MCF 10A (cell line): ENCODE measurements at regions of chr7 and their contacts with region 1.

Region 1: GRCh38 chr7:51141451-51142003 is 175.1 kb downstream of the COBL start:
- DNase-seq: peak; percentile 55
- H3K4me3 Mint-ChIP-seq: no peak overlapping the region
- H3K27ac Mint-ChIP-seq: no peak overlapping the region
- H3K4me1 Mint-ChIP-seq: peaks cover 27% of the 10 kb centered on the region
- H3K27me3 Mint-ChIP-seq: no peaks in the 10 kb centered on the region
- CTCF ChIP-seq: peak; percentile 71

Region 2: DNA sequence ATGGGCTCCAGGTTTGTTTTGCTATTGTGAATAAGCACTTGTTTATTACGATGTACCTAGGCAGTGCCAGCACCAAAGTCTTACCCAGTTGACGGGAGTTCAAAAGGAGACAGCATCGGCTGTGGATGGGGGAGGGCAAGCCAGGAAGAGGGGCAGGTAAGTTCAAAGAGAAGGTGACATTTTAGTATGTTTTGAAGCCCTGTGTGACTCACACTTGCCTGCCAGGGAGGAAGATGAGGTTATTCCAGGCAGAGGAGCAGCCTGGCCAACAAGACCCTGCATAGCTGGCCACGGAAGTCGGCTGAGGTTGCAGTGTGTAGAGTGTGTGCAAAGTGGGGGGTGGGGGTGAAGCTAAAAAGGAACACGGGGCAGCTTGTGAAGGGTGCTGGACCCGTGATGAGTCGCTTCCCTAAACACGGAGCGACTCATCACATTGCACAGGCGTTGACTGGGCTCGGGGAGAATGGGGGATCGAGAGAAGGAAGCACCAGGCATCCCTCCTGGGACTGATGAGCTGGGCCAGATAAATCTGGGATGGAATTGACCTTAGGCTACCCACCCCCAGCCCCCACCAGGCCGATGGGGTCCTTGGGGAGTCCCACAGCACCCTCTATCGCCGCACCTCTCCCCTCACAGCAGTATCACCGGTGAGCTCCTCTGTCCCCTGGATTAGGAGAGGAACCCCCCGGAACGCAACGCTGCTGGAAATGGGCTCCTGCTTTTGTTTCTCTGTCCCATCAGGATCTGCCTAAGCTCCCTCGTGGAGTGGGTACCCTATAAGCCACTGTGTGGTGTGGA is 934.9 kb before region 1 on chr7:
- CTCF ChIA-PET with region 1: interaction called, 12 read pairs
- POLR2A ChIA-PET with region 1: no interaction called
- intact Hi-C with region 1: loop called (anchors 1 kb)
- DNase-seq: no peak
- H3K4me3 Mint-ChIP-seq: no peak overlapping the region
- H3K27ac Mint-ChIP-seq: no peak overlapping the region
- H3K4me1 Mint-ChIP-seq: no peaks in the 10 kb centered on the region
- H3K27me3 Mint-ChIP-seq: peaks cover 56% of the 10 kb centered on the region
- CTCF ChIP-seq: no peak

Region 3: GRCh38 chr7:50632561-50633413 is 508.7 kb before region 1 on chr7:
- CTCF ChIA-PET with region 1: interaction called, 13 read pairs
- POLR2A ChIA-PET with region 1: no interaction called
- intact Hi-C with region 1: no loop called
- DNase-seq: peak; percentile 74
- H3K4me3 Mint-ChIP-seq: no peak overlapping the region
- H3K27ac Mint-ChIP-seq: no peak overlapping the region
- H3K4me1 Mint-ChIP-seq: peaks cover 15% of the 10 kb centered on the region
- H3K27me3 Mint-ChIP-seq: no peaks in the 10 kb centered on the region
- CTCF ChIP-seq: peak; percentile 79

Region 4: DNA sequence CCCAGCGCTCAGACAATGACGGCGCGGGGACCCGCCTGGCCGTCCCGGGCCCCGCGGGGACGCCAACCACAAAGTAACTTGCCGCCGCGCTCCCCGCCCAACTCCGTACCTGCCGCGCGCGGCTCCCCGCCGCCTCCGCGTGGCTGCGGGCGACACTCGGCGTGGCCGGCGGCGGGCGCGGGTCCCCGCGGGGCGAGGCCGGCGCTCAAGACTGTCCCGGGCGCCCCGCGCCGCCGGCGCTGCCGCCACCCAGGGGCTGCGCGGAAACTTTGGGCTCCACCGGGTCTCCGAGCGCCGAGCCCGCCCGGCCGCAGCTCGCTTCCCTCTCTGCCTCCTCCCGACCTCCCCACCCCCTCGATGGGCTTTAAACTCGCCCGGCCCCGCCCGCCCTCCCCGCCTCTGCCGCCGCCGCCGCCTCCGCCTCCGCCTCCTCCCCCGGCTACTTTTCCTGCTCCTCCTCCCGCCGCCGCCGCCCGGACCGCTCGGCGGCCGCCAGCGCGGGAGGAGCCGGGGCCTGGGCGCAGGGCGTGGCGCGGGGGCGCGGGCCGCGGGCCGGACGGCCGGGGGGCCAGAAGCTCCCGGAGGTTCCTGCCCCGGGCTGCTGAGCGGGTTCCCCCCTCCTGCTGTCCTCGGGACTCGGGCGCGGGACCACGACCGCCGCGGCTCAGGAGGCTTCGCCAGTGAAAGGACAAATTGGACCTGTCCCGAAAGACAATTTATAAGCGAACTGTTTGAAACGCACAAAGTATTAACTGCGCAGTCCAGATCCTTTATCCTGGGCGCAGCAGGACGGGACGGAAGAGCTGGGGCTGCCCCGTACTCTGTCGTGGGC is 348.2 kb before region 1 on chr7:
- CTCF ChIA-PET with region 1: interaction called, 13 read pairs
- POLR2A ChIA-PET with region 1: interaction called, 3 read pairs
- intact Hi-C with region 1: loop called (anchors 5 kb)
- DNase-seq: peak; percentile 62
- H3K4me3 Mint-ChIP-seq: peak overlapping the region; percentile 54
- H3K27ac Mint-ChIP-seq: no peak overlapping the region
- H3K4me1 Mint-ChIP-seq: peaks cover 13% of the 10 kb centered on the region
- H3K27me3 Mint-ChIP-seq: no peaks in the 10 kb centered on the region
- CTCF ChIP-seq: no peak

Region 5: GRCh38 chr7:51090411-51090810 is 51.1 kb before region 1 on chr7:
- CTCF ChIA-PET with region 1: interaction called, 12 read pairs
- POLR2A ChIA-PET with region 1: no interaction called
- intact Hi-C with region 1: no loop called
- DNase-seq: no peak
- H3K4me3 Mint-ChIP-seq: no peak overlapping the region
- H3K27ac Mint-ChIP-seq: no peak overlapping the region
- H3K4me1 Mint-ChIP-seq: peaks cover 5% of the 10 kb centered on the region
- H3K27me3 Mint-ChIP-seq: no peaks in the 10 kb centered on the region
- CTCF ChIP-seq: no peak

Region 6: DNA sequence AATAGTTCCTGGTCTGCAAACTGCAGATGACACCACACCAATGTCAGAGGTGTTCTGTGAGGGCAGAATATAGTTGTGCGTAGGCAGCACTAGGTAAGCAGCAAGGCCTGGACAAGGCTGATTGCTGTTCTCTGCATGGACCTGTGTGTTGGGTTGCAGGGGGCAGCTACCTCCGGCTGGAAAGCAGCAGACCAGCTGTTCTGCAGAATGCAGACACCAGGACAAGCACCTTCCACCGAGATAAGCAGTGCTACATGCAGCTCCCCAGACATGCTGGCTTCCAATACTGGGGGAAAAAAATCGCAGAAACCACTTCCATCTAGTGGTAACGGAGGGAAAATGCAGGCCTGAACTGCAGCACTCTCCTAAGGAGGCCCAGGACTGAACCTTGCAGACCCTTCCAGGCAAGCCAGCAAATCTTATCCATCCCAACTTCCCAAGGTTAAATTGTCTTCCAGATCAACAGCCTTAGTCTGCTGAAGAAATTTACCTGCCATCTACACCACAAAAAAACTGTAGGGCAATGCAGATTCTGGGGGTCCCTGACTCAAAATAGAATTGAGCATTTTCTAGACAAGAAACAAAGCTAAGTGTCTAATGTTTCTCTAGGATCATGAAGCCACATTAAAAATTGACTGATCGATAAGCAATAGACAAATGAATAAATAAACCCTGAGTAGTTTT is 225.5 kb after region 1 on chr7:
- CTCF ChIA-PET with region 1: interaction called, 10 read pairs
- POLR2A ChIA-PET with region 1: no interaction called
- intact Hi-C with region 1: no loop called
- DNase-seq: peak; percentile 62
- H3K4me3 Mint-ChIP-seq: no peak overlapping the region
- H3K27ac Mint-ChIP-seq: no peak overlapping the region
- H3K4me1 Mint-ChIP-seq: peaks cover 5% of the 10 kb centered on the region
- H3K27me3 Mint-ChIP-seq: peaks cover 11% of the 10 kb centered on the region
- CTCF ChIP-seq: peak; percentile 76

Region 7: GRCh38 chr7:51430480-51431086 is 289.1 kb after region 1 on chr7:
- CTCF ChIA-PET with region 1: no interaction called
- POLR2A ChIA-PET with region 1: no interaction called
- intact Hi-C with region 1: no loop called
- DNase-seq: peak; percentile 67
- H3K4me3 Mint-ChIP-seq: no peak overlapping the region
- H3K27ac Mint-ChIP-seq: no peak overlapping the region
- H3K4me1 Mint-ChIP-seq: no peaks in the 10 kb centered on the region
- H3K27me3 Mint-ChIP-seq: peaks cover 83% of the 10 kb centered on the region
- CTCF ChIP-seq: peak; percentile 84